ENCODE measurements at regions of chr7 and their contacts with region 1.

Region 1: DNA sequence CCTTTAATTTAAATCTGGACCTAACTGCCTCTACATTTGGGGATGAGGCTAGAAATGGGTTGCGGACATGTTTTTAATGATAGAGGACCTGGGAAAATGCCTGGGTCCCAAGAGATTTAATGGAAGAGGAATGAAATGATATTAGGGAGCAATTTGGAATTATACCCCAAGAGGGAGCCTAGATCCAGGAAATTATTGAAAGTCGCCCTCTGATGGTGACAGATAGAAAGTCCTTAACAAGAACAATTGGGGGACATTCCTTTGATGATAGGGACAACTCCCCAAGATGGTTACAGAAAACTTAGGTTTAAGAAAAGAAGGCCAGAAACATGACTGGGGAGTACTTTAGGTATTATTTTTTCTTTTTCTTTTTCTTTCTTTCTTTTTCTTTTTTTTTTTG is 9.5 kb upstream of the TSGA13 start:
- DNase-seq: peak; percentile 55
- H3K4me3 Mint-ChIP-seq: no peak overlapping the region
- H3K27ac Mint-ChIP-seq: no peak overlapping the region
- H3K4me1 Mint-ChIP-seq: no peaks in the 10 kb centered on the region
- H3K27me3 Mint-ChIP-seq: no peaks in the 10 kb centered on the region
- CTCF ChIP-seq: peak; percentile 66

Region 2: DNA sequence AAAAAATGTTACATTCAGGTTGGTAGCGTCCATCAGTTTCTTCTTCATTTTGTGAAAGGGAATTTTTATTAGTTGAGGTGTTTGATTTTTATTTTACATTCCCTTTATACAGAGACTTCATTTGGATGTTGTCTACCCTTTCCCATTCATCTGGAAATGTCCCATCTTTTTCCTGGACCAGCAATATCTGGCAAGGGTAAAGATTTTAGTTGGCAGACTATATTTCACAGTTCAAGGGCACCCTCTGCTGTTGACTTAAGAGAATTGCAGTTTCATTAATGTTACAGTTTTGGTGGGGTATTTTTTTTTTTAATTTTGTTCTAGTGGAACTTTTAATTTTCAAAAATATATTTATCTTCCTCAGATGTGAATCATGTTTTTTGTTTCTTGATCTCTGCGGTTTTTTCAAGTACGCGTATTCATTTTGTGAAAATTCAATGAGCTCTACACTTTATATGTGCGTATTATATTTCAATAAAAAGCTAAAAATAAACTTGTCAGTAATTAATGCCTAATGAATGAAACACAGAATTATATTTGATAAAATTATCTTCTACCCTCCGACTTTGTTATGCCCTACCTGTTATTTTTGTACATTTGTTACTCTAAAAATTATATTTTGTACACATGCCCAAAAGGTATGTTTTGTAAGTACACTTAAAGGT is 136.1 kb after region 1 on chr7:
- CTCF ChIA-PET with region 1: no interaction called
- POLR2A ChIA-PET with region 1: no interaction called
- intact Hi-C with region 1: loop called (anchors 5 kb)
- DNase-seq: peak; percentile 63
- H3K4me3 Mint-ChIP-seq: no peak overlapping the region
- H3K27ac Mint-ChIP-seq: no peak overlapping the region
- H3K4me1 Mint-ChIP-seq: peaks cover 6% of the 10 kb centered on the region
- H3K27me3 Mint-ChIP-seq: no peaks in the 10 kb centered on the region
- CTCF ChIP-seq: peak; percentile 76

Region 3: GRCh38 chr7:130896898-130897514 is 201.2 kb after region 1 on chr7:
- CTCF ChIA-PET with region 1: no interaction called
- POLR2A ChIA-PET with region 1: no interaction called
- intact Hi-C with region 1: no loop called
- DNase-seq: peak; percentile 74
- H3K4me3 Mint-ChIP-seq: peak overlapping the region; percentile 35
- H3K27ac Mint-ChIP-seq: peak overlapping the region; percentile 76
- H3K4me1 Mint-ChIP-seq: peaks cover 83% of the 10 kb centered on the region
- H3K27me3 Mint-ChIP-seq: no peaks in the 10 kb centered on the region
- CTCF ChIP-seq: peak; percentile 63